B cell (primary cell): ENCODE measurements at regions of chr20 and their contacts with region 1.

Region 1: DNA sequence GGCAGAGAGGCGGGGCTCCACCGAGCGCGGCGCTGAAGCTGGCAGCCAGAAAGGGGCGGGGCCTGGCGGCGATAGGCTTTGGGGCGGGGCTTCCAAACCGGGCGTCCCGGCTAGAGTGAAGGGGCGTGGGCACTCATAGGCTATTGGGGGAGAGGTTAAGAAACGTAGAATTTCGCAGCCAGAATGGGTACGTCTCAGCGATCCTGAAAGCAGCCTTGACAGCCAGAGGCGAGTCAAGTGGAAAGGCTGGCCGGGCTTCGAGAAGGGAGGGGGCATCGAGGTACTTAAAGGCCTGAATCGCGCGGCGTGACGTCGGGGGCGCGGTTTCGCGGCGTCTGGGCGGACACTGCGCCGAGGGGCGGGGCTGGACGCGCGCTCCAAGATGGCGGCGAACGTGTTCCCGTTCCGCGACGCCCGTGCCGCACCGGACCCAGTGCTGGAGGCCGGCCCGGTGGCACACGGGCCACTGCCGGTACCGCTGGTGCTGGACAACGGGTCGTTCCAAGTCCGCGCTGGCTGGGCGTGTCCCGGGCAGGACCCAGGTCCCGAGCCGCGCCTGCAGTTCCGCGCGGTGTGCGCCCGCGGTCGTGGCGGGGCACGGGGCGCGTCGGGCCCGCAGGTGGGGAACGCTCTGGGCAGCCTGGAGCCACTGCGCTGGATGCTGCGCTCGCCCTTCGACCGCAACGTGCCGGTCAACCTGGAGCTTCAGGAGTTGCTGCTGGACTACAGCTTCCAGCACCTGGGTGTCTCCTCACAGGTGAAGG is at the start of gene ACTR5:
- DNase-seq: peak; percentile 99
- ATAC-seq: peak; percentile 93
- H3K4me3 ChIP-seq: peak within 1 kb of the TSS; percentile 56 to 82 (median 71)
- H3K4me3 Mint-ChIP-seq: peak within 1 kb of the TSS; percentile 97
- H3K27ac ChIP-seq: peak within 1 kb of the TSS; percentile 80 to 91
- H3K27ac Mint-ChIP-seq: peak within 1 kb of the TSS; percentile 99
- H3K4me1 ChIP-seq: peaks cover 13 to 17% of the 10 kb centered on the region in 2 donors
- H3K4me1 Mint-ChIP-seq: peaks cover 22% of the 10 kb centered on the region
- H3K27me3 ChIP-seq: peaks cover 0 to 4% (median 2%) of the 10 kb centered on the region in 4 experiments
- H3K27me3 Mint-ChIP-seq: peaks cover 6% of the 10 kb centered on the region
- CTCF ChIP-seq: no peak
- total RNA-seq, gene ACTR5: 15.4 and 16.7 TPM in 2 replicates

Region 2: DNA sequence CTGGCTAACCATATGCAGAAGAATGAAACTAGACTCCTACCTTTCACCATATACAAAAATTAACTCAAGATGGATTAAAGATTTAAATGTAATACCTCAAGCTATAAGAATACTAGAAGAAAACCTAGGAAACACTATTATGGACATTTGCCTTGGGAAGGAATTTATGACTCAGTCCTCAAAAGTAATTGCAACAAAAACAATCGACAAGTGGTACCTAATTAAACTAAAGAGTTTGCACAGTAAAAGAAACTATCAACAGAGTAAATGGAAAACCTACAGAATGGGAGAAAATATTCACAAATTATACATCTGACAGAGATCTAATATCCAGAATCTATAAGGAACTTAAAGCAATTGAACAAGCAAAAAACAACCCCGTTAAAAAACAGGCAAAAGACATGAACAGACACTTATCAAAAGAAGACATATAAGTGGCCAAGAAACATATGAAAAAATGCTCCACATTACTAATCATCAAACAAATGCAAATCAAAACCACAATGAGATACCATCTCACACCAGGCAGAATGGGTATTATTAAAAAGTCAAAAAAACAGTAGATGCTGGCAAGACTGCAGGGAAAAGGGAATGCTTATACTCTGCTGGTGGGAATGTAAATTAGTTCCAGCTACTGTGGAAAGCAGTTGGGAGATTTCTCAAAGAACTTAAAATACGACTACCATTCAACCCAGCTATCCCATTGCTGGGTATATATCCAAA is 243.8 kb before region 1 on chr20:
- CTCF ChIA-PET with region 1: no interaction called
- POLR2A ChIA-PET with region 1: no interaction called
- intact Hi-C with region 1: no loop called
- DNase-seq: no peak
- ATAC-seq: no peak
- H3K4me3 ChIP-seq: no peak overlapping the region
- H3K4me3 Mint-ChIP-seq: no peak overlapping the region
- H3K27ac ChIP-seq: no peak overlapping the region
- H3K27ac Mint-ChIP-seq: no peak overlapping the region
- H3K4me1 ChIP-seq: no peaks in the 10 kb centered on the region
- H3K4me1 Mint-ChIP-seq: no peaks in the 10 kb centered on the region
- H3K27me3 ChIP-seq: no peaks in the 10 kb centered on the region
- H3K27me3 Mint-ChIP-seq: no peaks in the 10 kb centered on the region
- CTCF ChIP-seq: no peak

Region 3: DNA sequence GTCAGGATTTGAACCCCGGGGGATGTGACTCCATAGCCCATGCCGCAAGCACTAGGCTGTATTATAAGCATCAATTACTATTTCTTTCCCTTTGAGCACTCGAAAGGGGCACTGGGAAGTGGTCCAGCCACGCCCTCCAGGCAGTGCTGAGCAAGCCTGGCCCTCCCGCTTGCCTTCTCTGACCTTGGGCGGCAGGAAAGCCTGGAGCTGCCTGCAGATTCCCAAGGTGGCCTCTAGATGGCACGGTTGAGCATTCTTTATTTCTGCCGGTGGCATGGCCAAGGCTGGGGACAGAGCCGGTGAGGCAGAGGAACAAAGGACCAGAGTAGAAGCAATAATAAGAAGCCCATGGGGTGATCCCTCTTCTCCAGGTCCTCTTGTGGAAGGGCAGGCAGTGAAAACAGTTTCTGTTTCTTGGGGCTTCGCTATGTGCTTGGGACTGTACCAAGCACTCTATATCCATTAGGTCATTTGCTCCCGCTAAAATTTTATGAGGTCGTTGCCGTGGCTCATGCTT is 114.6 kb before region 1 on chr20:
- CTCF ChIA-PET with region 1: interaction called, 55 read pairs
- POLR2A ChIA-PET with region 1: no interaction called
- intact Hi-C with region 1: loop called (anchors 1 kb)
- DNase-seq: peak; percentile 70
- ATAC-seq: peak; percentile 90
- H3K4me3 ChIP-seq: no peak overlapping the region
- H3K4me3 Mint-ChIP-seq: no peak overlapping the region
- H3K27ac ChIP-seq: no peak overlapping the region
- H3K27ac Mint-ChIP-seq: no peak overlapping the region
- H3K4me1 ChIP-seq: peaks cover 3 to 5% of the 10 kb centered on the region in 2 donors
- H3K4me1 Mint-ChIP-seq: peaks cover 5% of the 10 kb centered on the region
- H3K27me3 ChIP-seq: peaks cover 0 to 16% (median 4%) of the 10 kb centered on the region in 4 experiments
- H3K27me3 Mint-ChIP-seq: peaks cover 20% of the 10 kb centered on the region
- CTCF ChIP-seq: peak; percentile 99

Region 4: GRCh38 chr20:38674092-38674764 is 74.1 kb before region 1 on chr20:
- CTCF ChIA-PET with region 1: no interaction called
- POLR2A ChIA-PET with region 1: no interaction called
- intact Hi-C with region 1: loop called (anchors 1 kb)
- DNase-seq: peak; percentile 77
- ATAC-seq: peak; percentile 94
- H3K4me3 ChIP-seq: peak overlapping the region; percentile 26 to 68 (median 62)
- H3K4me3 Mint-ChIP-seq: peak overlapping the region; percentile 88
- H3K27ac ChIP-seq: no peak overlapping the region
- H3K27ac Mint-ChIP-seq: peak overlapping the region; percentile 59
- H3K4me1 ChIP-seq: peaks cover 10 to 17% of the 10 kb centered on the region in 2 donors
- H3K4me1 Mint-ChIP-seq: peaks cover 17% of the 10 kb centered on the region
- H3K27me3 ChIP-seq: peaks cover 0 to 47% (median 20%) of the 10 kb centered on the region in 4 experiments
- H3K27me3 Mint-ChIP-seq: peaks cover 38% of the 10 kb centered on the region
- CTCF ChIP-seq: no peak

Region 5: GRCh38 chr20:38790200-38791053 is 42.1 kb after region 1 on chr20:
- CTCF ChIA-PET with region 1: interaction called, 15 read pairs
- POLR2A ChIA-PET with region 1: no interaction called
- intact Hi-C with region 1: no loop called
- DNase-seq: peak; percentile 70
- ATAC-seq: peak; percentile 65
- H3K4me3 ChIP-seq: no peak overlapping the region
- H3K4me3 Mint-ChIP-seq: peak overlapping the region; percentile 50
- H3K27ac ChIP-seq: no peak overlapping the region
- H3K27ac Mint-ChIP-seq: peak overlapping the region; percentile 29
- H3K4me1 ChIP-seq: peaks cover 3 to 4% of the 10 kb centered on the region in 2 donors
- H3K4me1 Mint-ChIP-seq: peaks cover 3% of the 10 kb centered on the region
- H3K27me3 ChIP-seq: no peaks in the 10 kb centered on the region
- H3K27me3 Mint-ChIP-seq: no peaks in the 10 kb centered on the region
- CTCF ChIP-seq: peak; percentile 75

Region 6: DNA sequence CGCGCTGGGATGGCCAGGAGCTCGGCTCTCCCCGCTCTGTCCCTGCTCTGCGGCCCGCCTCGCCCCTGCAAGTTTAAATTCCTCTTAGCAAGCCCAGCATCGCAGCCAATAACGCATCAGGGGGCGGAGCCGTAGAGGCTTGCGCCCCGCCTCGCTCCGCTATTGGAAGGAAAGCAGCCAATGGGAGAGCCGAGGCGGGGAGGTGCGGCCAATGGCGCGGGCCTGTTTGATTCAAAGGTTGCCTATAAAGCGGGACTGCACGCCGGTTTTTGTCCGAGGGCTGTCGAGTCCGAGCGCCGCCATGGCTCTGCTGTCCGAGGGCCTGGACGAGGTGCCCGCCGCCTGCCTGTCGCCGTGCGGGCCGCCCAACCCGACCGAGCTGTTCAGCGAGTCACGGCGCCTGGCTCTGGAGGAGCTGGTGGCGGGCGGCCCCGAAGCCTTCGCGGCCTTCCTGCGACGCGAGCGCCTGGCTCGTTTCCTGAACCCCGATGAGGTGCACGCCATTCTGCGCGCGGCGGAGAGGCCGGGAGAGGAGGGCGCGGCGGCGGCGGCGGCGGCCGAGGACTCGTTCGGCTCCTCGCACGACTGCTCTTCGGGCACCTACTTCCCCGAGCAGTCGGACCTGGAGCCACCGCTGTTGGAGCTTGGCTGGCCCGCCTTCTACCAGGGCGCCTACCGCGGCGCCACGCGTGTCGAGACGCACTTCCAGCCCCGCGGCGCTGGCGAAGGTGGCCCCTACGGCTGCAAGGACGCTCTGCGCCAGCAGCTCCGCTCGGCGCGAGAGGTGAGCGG is 178.1 kb after region 1 on chr20 and contains the start of gene FAM83D:
- CTCF ChIA-PET with region 1: interaction called, 9 read pairs
- POLR2A ChIA-PET with region 1: no interaction called
- intact Hi-C with region 1: loop called (anchors 1 kb)
- DNase-seq: peak; percentile 95
- ATAC-seq: peak; percentile 96
- H3K4me3 ChIP-seq: peak within 1 kb of the TSS; percentile 31 to 73 (median 59)
- H3K4me3 Mint-ChIP-seq: peak within 1 kb of the TSS; percentile 82
- H3K27ac ChIP-seq: peak within 1 kb of the TSS in 1 of 2 donors; percentile 49
- H3K27ac Mint-ChIP-seq: peak within 1 kb of the TSS; percentile 75
- H3K4me1 ChIP-seq: peaks cover 6 to 18% of the 10 kb centered on the region in 2 donors
- H3K4me1 Mint-ChIP-seq: peaks cover 27% of the 10 kb centered on the region
- H3K27me3 ChIP-seq: peaks cover 0 to 3% (median 1%) of the 10 kb centered on the region in 4 experiments
- H3K27me3 Mint-ChIP-seq: no peaks in the 10 kb centered on the region
- CTCF ChIP-seq: peak; percentile 34
- total RNA-seq, gene FAM83D: 1.7 and 2.0 TPM in 2 replicates